ENCODE measurements at regions of chr11 and their contacts with region 1.

Region 1: GRCh38 chr11:3091791-3092602 is 34.8 kb upstream of the CARS1 start:
- DNase-seq: peak; percentile 53 to 71
- H3K4me3 ChIP-seq: no peak overlapping the region
- H3K27ac ChIP-seq: peak overlapping the region in 1 of 2 donors; percentile 63
- H3K4me1 ChIP-seq: no peaks in the 10 kb centered on the region
- H3K27me3 ChIP-seq: no peaks in the 10 kb centered on the region
- CTCF ChIP-seq: peak; percentile 97 to 98 (median 98)
- POLR2A ChIP-seq: no peak

Region 2: DNA sequence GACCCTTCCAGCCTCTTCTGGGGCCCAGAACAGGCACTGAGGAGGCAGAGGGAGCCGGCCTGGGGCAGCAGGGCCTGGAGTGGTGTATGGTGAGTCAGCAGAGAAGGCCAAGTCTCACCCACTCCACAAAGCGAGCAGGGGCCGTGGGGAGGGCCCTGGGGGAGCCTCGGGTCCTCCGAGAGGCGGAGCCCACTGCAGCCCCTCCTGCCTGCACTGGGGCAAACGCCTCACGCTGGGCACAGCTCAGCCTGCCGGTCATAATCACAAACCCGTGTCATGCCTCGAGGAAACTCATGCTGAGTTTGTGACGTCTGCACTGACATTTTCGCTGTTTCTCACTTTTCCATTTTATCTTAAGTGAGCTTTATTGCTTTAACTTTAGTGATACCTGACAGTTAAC is 1821.0 kb before region 1 on chr11:
- intact Hi-C with region 1: loop called (anchors 10 kb)
- DNase-seq: no peak
- H3K4me3 ChIP-seq: no peak overlapping the region
- H3K27ac ChIP-seq: no peak overlapping the region
- H3K4me1 ChIP-seq: no peaks in the 10 kb centered on the region
- H3K27me3 ChIP-seq: no peaks in the 10 kb centered on the region
- CTCF ChIP-seq: no peak
- POLR2A ChIP-seq: no peak

Region 3: GRCh38 chr11:2409611-2410468 is 682.2 kb before region 1 on chr11:
- intact Hi-C with region 1: no loop called
- DNase-seq: no peak
- H3K4me3 ChIP-seq: peak overlapping the region in 1 of 3 donors; percentile 15
- H3K27ac ChIP-seq: peak overlapping the region in 1 of 2 donors; percentile 12
- H3K4me1 ChIP-seq: no peaks in the 10 kb centered on the region
- H3K27me3 ChIP-seq: no peaks in the 10 kb centered on the region
- CTCF ChIP-seq: no peak
- POLR2A ChIP-seq: no peak

Region 4: DNA sequence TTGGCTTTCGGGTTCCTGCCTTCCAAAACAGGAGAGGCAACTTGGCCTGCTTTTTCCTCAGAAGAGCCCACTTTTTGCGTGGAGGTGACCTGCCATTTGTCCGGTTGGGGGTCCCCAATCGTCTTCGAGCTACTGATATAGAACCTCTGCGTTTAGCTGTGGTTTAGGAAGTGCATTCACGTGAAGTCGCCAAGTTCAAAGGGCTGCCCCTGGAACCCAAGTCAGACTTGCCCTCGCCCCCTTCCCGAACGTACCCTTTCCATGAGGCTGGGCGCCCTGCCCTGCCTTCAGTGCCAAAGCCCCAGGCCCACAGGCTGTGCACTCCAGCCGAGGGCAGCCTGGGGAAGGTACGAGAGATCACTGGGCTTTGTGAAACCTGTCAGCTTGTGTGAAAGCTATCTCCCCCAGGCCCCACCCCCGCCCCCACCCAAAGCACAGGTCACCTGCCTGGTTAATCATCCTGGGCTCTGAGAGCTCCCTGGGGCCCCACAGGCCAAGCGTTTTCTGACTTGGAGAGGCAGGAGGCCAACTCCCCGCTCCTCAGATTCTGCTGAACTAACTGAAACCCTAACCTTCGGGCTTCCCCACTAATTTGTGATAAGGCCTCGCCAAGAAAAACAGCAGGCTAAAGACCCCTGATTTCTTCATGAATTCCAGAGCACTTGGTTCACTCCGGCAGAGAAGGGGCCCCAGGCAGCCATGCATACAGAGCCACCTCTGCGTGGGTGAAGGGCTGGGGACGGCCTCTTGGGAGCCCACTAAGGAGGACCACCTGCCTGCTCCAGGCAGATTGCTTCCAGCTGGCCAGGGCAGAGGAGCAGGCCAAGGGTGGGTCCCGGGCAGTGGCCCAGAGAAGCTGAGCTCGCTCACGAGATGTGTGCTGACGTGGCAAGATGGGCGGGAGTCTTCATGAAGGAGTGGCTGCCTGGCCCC is 366.4 kb before region 1 on chr11:
- intact Hi-C with region 1: no loop called
- DNase-seq: no peak
- H3K4me3 ChIP-seq: no peak overlapping the region
- H3K27ac ChIP-seq: peak overlapping the region; percentile 10 to 63
- H3K4me1 ChIP-seq: no peaks in the 10 kb centered on the region
- H3K27me3 ChIP-seq: no peaks in the 10 kb centered on the region
- CTCF ChIP-seq: no peak
- POLR2A ChIP-seq: no peak

Region 5: DNA sequence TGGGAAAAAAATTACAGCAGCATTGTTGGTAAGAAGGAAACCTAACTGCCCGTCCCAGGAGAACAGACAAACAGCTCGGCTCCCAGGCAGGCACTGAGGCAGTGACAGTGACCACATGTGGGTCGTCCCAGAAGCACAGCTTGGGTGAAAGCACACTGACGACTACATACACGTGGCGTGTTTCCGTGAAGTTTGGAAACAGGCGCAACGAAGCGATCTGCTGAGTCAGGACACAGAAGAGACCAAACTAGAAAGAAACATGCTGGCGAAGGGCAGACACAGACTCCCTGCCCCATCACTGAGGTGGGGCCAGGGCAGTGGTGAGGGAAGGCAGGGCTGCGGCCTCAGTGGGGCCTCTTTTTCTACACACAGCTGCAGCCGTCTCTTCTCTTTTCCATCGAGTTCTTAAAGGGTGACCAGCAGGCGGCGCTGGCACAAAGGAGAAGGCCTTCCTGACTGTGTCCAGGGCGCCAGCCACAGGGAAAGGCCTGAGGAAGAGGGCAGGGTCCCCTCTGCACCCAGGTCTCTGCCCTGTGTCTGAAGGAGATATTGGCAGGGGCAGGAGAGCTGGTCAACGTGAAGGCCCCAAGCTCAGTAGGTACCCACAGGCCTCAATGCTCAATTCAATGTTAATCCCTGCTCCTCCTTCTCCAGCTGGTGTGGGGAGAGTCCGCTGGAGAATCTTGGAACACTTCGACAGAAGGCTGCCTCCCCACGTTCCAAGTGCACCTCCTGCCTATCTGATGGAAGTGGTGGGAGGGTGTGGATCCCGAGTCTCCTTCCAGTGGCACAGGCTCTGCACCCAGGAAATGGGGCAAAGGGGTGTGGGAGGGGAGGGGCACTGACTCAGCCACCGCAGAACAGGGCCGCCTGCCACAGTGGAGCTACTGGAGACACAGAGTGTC is 54.7 kb before region 1 on chr11:
- intact Hi-C with region 1: loop called (anchors 5 kb)
- DNase-seq: peak; percentile 59 to 67
- H3K4me3 ChIP-seq: no peak overlapping the region
- H3K27ac ChIP-seq: no peak overlapping the region
- H3K4me1 ChIP-seq: no peaks in the 10 kb centered on the region
- H3K27me3 ChIP-seq: no peaks in the 10 kb centered on the region
- CTCF ChIP-seq: peak in 2 of 3 donors; percentile 73 to 78
- POLR2A ChIP-seq: no peak

Measured in breast epithelium (tissue), 4 donors.